IMR-90 (cell line): ENCODE measurements at regions of chr2 and their contacts with region 1.

Region 1: GRCh38 chr2:3423492-3424175 is 44.1 kb downstream of the TRAPPC12 start:
- DNase-seq: peak; percentile 27
- ATAC-seq: peak; percentile 60; the same call in 1 of the 2 replicates
- H3K4me3 ChIP-seq: no peak overlapping the region
- H3K27ac ChIP-seq: no peak overlapping the region
- H3K4me1 ChIP-seq: peaks cover 2% of the 10 kb centered on the region; the same call in 1 of the 2 replicates
- H3K27me3 ChIP-seq: no peaks in the 10 kb centered on the region
- CTCF ChIP-seq: peak; percentile 73
- POLR2A ChIP-seq: no peak
- RAD21 ChIP-seq: peak; percentile 62

Region 2: DNA sequence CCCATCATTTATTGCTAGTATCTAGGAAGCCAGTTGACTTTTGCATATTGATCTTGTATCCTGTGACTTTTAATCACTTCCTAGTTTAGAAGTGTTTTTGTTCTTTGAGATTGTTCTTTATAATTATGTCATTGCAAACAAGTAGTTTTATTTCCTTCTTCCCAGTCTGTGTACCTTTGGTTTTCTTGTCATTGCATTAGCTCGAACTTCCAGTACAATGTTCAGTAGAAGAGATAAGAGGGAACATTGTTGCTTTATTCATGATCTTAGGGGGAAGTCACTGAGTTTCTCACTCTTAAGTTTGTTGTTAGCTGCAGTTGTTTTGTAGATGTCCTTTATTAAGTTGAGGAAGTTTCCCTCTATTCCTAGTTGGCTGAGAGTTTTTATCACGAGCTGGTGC is 16.8 kb after region 1 on chr2:
- CTCF ChIA-PET with region 1: interaction called, 10 read pairs
- POLR2A ChIA-PET with region 1: no interaction called
- dilution Hi-C with region 1: no loop called
- in situ Hi-C with region 1: no loop called
- intact Hi-C with region 1: no loop called
- DNase-seq: no peak
- ATAC-seq: no peak
- H3K4me3 ChIP-seq: no peak overlapping the region
- H3K27ac ChIP-seq: no peak overlapping the region
- H3K4me1 ChIP-seq: 0 out of 2 replicates have a peak, but pooled peaks cover 2% of the 10 kb centered on the region
- H3K27me3 ChIP-seq: no peaks in the 10 kb centered on the region
- CTCF ChIP-seq: no peak
- POLR2A ChIP-seq: no peak
- RAD21 ChIP-seq: no peak

Region 3: DNA sequence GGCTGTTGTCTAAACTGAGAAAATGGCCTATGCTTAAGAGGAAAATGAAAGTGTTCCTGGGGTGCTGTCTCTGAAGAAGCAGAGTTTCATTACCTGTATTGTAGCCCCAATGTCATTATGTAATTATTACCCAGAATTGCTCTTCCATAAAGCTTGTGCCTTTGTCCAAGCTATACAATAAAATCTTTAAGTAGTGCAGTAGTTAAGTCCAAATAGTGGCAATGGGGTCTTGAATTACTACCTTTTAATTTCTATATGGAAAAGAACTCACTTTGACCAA is 220.6 kb after region 1 on chr2:
- CTCF ChIA-PET with region 1: interaction called, 3 read pairs
- POLR2A ChIA-PET with region 1: no interaction called
- dilution Hi-C with region 1: no loop called
- in situ Hi-C with region 1: loop called (anchors 10 kb)
- intact Hi-C with region 1: no loop called
- DNase-seq: no peak
- ATAC-seq: no peak
- H3K4me3 ChIP-seq: no peak overlapping the region
- H3K27ac ChIP-seq: no peak overlapping the region
- H3K4me1 ChIP-seq: no peaks in the 10 kb centered on the region
- H3K27me3 ChIP-seq: no peaks in the 10 kb centered on the region; the same call in 1 of the 2 replicates
- CTCF ChIP-seq: no peak
- POLR2A ChIP-seq: no peak
- RAD21 ChIP-seq: no peak

Region 4: DNA sequence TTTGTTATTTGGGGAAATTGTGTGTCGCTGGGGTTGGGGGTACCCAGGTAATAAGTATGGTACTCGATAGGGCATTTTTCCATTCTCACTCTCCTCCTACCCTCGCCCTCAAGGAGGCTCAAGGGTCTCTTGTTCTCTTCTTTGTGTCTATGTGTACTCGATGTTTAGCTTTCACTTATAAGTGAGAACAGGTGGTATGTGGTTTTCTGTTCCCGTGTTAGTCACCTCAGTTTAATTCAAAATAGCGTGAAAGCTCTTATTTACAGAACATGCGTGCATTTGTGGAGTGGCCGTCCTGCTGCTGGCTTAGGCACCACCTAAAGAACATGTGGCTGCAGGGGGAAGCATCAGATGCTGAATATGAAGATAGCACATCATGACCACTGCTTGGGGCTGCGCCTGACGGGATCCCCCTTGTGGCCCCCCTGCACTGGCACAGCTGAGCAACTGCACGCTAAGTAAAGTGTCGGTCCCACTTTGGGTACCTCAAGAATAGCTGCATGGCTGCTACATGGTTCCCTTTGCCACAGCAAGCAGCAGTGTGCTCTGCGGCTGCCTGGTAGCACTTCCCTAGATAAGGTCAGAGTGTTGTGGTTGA is 848.7 kb after region 1 on chr2:
- CTCF ChIA-PET with region 1: no interaction called
- POLR2A ChIA-PET with region 1: no interaction called
- dilution Hi-C with region 1: no loop called
- in situ Hi-C with region 1: no loop called
- intact Hi-C with region 1: no loop called
- DNase-seq: no peak
- ATAC-seq: no peak
- H3K4me3 ChIP-seq: no peak overlapping the region
- H3K27ac ChIP-seq: no peak overlapping the region
- H3K4me1 ChIP-seq: no peaks in the 10 kb centered on the region
- H3K27me3 ChIP-seq: no peaks in the 10 kb centered on the region
- CTCF ChIP-seq: no peak
- POLR2A ChIP-seq: no peak
- RAD21 ChIP-seq: no peak